Sigmoid colon (tissue), 7 donors: ENCODE measurements at regions of chr3 and their contacts with region 1.

Region 1: GRCh38 chr3:177764377-177764912 is 567.2 kb upstream of the TBL1XR1 start:
- DNase-seq: no peak
- H3K4me3 ChIP-seq: no peak overlapping the region
- H3K27ac ChIP-seq: peak overlapping the region; percentile 42 to 78 (median 66)
- H3K4me1 ChIP-seq: peaks cover 0 to 27% (median 22%) of the 10 kb centered on the region in 4 donors
- H3K27me3 ChIP-seq: no peaks in the 10 kb centered on the region
- CTCF ChIP-seq: no peak
- EP300 ChIP-seq: peak in 3 of 4 donors; percentile 45 to 70 (median 63)
- POLR2A ChIP-seq: no peak

Region 2: DNA sequence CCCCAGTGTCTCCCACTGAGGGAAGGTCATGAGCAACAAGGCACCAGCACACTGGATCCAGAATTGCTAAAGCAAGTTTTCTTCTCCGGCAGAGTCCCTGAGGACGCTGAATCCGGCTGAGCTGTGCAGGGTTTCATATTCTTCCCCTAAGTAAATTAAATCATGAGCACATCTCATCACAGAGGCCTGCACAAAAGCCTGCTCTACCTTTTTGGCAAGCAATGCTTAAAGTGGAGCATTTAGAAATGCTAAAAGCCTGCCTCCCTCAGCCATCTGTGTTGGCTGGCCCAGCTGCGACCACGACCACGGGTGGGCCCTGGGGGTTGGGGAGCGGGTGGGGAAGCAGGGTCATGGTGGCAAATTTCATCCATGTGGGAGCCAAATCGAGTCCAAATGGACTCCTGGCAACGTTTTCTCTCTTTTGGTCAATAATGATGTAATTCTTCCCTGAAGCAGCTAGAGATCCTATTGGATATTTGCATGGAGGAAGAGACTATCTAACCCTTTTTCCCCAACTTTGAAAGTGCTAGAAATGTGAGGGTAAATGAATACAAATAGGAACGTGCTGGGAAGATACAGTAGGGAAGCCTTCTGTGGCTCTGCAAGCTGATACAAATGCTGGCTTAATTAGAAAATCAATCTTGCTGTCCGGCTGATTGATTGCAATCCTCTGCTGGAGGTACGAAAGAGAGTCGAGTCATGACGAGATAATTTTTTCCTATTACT is 34.3 kb before region 1 on chr3:
- intact Hi-C with region 1: loop called (anchors 5 kb)
- DNase-seq: peak; percentile 77
- H3K4me3 ChIP-seq: no peak overlapping the region
- H3K27ac ChIP-seq: peak overlapping the region; percentile 30 to 58 (median 36)
- H3K4me1 ChIP-seq: peaks cover 0 to 25% (median 12%) of the 10 kb centered on the region in 4 donors
- H3K27me3 ChIP-seq: no peaks in the 10 kb centered on the region
- CTCF ChIP-seq: no peak
- EP300 ChIP-seq: no peak
- POLR2A ChIP-seq: no peak